PC-3 (cell line): ENCODE measurements at regions of chr14 and their contacts with region 1.

Region 1: DNA sequence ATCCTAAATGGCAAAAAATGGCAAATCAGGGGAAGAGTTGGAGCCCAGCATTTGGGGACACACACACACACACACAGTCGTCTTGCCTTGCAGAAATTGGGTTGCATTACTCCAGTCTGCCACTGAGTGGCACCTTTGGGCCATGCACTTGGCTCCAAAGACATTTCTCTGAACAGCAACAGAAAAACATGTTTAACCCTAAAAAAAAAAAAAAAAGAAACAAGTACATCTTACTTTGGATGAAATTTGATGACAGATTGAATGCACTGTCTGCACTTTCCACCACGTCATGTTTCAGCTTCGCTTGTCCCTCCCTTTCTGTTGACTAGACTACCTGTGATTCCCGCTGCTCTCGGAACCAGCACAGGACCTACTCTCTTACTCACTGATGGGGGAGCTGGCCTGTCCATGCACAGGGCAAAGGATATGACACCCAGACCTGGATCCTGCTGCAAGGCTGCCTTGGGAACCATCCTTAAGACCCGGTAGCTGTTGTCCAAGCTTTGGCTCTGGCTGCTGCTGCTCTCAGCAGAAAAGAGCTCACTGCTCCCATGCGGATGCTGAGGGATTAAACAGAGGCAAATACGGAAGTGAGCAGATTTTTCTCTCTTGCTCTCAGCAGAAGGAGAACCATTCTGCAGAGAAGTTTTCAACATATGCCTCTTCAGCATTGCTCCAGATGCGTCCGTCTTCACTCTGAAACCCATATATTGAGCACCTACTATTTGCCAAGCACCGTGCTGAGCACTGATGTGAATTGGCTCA is 376.8 kb downstream of the DPF3 start:
- DNase-seq: peak; percentile 95
- ATAC-seq: peak; percentile 64
- H3K4me3 ChIP-seq: no peak overlapping the region
- H3K27ac ChIP-seq: no peak overlapping the region
- H3K4me1 ChIP-seq: peaks cover 18% of the 10 kb centered on the region
- H3K27me3 ChIP-seq: no peaks in the 10 kb centered on the region
- CTCF ChIP-seq: peak; percentile 98

Region 2: DNA sequence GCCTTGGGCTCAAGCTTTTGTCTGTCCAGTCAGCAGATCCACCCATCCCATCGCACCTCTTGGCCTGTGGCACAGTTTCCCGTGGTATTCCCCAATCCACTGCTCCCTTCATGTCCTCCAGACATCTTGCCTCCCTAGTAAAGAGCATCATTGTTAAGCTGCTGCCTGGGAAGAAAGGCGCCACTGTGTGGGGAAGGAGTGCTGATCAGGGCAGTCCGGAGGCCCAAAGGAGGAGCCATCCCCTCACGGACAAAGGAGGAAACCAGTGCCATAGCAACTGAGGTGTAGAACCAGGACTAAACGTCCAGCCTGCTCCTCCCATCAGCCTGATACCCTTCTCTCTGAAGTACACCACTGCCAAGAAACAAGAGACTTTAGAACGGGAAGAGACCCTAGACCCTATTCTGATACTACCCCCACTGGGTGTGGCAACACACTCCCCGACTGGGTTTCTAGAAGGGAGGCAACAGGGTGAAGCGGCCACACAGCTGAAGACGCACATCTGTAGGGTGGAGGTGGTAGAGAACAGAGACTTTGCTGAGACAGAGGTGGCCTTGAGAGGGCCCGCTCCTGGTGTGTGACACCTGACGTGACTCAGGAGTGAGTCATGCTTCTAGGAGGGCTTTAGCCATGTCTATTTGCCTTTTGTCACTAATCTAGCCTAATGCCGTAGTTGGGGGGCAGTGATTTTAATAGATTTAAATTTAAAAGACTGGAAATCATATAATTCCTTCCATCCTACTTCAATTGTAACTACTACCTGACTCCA is 191.8 kb after region 1 on chr14:
- CTCF ChIA-PET with region 1: no interaction called
- POLR2A ChIA-PET with region 1: no interaction called
- intact Hi-C with region 1: loop called (anchors 1 kb)
- DNase-seq: peak; percentile 91
- ATAC-seq: peak; percentile 98
- H3K4me3 ChIP-seq: no peak overlapping the region
- H3K27ac ChIP-seq: no peak overlapping the region
- H3K4me1 ChIP-seq: peaks cover 12% of the 10 kb centered on the region
- H3K27me3 ChIP-seq: no peaks in the 10 kb centered on the region
- CTCF ChIP-seq: 0 out of 2 replicates have a peak, but pooled peaks have one; percentile 17

Region 3: GRCh38 chr14:72801381-72801812 is 284.3 kb after region 1 on chr14:
- CTCF ChIA-PET with region 1: no interaction called
- POLR2A ChIA-PET with region 1: no interaction called
- intact Hi-C with region 1: loop called (anchors 1 kb)
- DNase-seq: peak; percentile 99
- ATAC-seq: peak; percentile 98
- H3K4me3 ChIP-seq: peak overlapping the region; percentile 9; the same call in 1 of the 2 replicates
- H3K27ac ChIP-seq: peak overlapping the region; percentile 94
- H3K4me1 ChIP-seq: peaks cover 27% of the 10 kb centered on the region
- H3K27me3 ChIP-seq: no peaks in the 10 kb centered on the region
- CTCF ChIP-seq: no peak

Region 4: GRCh38 chr14:72904840-72905561 is 387.9 kb after region 1 on chr14:
- CTCF ChIA-PET with region 1: interaction called, 58 read pairs
- POLR2A ChIA-PET with region 1: no interaction called
- intact Hi-C with region 1: loop called (anchors 1 kb)
- DNase-seq: peak; percentile 90
- ATAC-seq: peak; percentile 76
- H3K4me3 ChIP-seq: no peak overlapping the region
- H3K27ac ChIP-seq: no peak overlapping the region
- H3K4me1 ChIP-seq: peaks cover 31% of the 10 kb centered on the region
- H3K27me3 ChIP-seq: no peaks in the 10 kb centered on the region
- CTCF ChIP-seq: peak; percentile 100

Region 5: DNA sequence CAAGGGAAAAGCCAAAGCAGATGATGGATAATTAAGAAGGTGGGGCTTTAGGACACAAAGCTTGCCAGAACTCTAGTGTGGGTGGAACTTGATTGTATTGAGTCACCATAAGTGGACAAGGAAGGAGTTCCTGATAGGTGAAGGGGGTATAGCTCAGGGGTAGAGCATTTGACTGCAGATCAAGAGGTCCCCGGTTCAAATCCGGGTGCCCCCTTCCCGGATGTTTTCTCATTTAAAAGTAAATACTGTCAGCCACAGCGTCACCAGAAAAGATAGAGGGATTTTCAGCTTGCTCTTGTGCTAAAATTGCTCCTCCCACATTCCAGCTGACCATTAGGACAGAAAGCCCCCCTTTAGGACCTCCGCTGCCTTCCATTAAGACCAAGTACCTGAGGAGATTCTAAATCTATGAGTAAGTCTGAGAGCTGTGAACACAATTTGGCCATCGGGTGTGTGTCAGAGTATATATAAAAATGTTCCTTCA is 445.8 kb after region 1 on chr14:
- CTCF ChIA-PET with region 1: interaction called, 10 read pairs
- POLR2A ChIA-PET with region 1: no interaction called
- intact Hi-C with region 1: no loop called
- DNase-seq: peak; percentile 91
- ATAC-seq: peak; percentile 40
- H3K4me3 ChIP-seq: no peak overlapping the region
- H3K27ac ChIP-seq: peak overlapping the region; percentile 69; the same call in 1 of the 2 replicates
- H3K4me1 ChIP-seq: peaks cover 28% of the 10 kb centered on the region
- H3K27me3 ChIP-seq: no peaks in the 10 kb centered on the region
- CTCF ChIP-seq: no peak